CD8-positive, alpha-beta T cell (primary cell): ENCODE measurements at regions of chr20 and their contacts with region 1.

Region 1: GRCh38 chr20:33070111-33071053 is 9.1 kb upstream of the BPIFB4 start:
- DNase-seq: no peak
- ATAC-seq: no peak
- H3K4me3 ChIP-seq: no peak overlapping the region
- H3K4me3 Mint-ChIP-seq: no peak overlapping the region
- H3K27ac ChIP-seq: no peak overlapping the region
- H3K27ac Mint-ChIP-seq: no peak overlapping the region
- H3K4me1 ChIP-seq: no peaks in the 10 kb centered on the region
- H3K4me1 Mint-ChIP-seq: peaks cover 6% of the 10 kb centered on the region
- H3K27me3 ChIP-seq: no peaks in the 10 kb centered on the region
- H3K27me3 Mint-ChIP-seq: no peaks in the 10 kb centered on the region
- CTCF ChIP-seq: no peak

Region 2: DNA sequence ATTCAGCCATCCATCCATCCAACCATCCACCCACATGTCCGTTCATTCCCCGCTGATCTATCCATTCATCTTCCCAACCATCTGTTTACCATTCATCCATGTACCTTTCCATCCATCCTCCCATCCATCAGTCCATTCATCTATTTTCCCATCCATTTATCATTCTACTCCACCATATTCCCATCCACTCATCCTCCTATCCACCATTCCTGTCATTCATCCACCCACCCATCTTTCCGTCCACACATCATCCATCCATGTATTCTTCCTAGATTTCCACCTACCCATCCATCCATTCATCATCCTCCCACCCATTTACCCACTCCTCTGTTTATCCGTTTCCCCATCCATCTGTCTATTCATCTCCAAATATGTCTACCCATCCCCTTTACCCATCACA is 32.1 kb before region 1 on chr20:
- CTCF ChIA-PET with region 1: no interaction called
- POLR2A ChIA-PET with region 1: no interaction called
- intact Hi-C with region 1: loop called in 1 of 2 experiments (anchors 1 kb)
- DNase-seq: no peak
- ATAC-seq: no peak
- H3K4me3 ChIP-seq: no peak overlapping the region
- H3K4me3 Mint-ChIP-seq: no peak overlapping the region
- H3K27ac ChIP-seq: no peak overlapping the region
- H3K27ac Mint-ChIP-seq: no peak overlapping the region
- H3K4me1 ChIP-seq: no peaks in the 10 kb centered on the region
- H3K4me1 Mint-ChIP-seq: no peaks in the 10 kb centered on the region
- H3K27me3 ChIP-seq: peaks cover 0 to 2% of the 10 kb centered on the region in 2 experiments
- H3K27me3 Mint-ChIP-seq: no peaks in the 10 kb centered on the region
- CTCF ChIP-seq: no peak